A549 (cell line): ENCODE measurements at regions of chr5 and their contacts with region 1.

Region 1: DNA sequence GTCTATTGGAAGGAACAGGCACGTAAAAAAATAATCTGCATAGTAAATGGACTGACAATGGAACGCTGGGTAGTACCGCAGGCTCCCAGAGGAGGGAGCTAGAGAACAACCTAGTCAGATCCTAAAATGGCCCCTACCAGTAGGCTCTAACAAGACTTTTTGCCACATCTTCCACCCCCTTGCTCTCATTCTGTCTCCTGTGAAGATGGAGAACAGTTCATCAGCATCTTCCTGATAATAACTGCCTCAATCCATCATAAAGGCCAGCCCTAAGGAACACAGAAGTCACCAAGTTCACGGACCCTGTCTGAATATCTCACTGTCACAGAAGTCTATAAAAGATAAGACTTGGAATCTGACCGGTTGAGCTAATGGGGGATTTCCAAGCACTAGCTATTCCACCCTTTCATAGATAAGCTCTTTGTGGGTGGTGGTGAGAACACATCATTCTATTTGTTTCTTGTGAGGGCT is 133.4 kb downstream of the SLC1A3 start:
- DNase-seq: peak; percentile 47 to 72
- ATAC-seq: peak; percentile 37 to 62; a peak in 3 of 6 replicates
- H3K4me3 ChIP-seq: no peak overlapping the region
- H3K27ac ChIP-seq: no peak overlapping the region
- H3K4me1 ChIP-seq: 0 out of 3 replicates have a peak, but pooled peaks cover 4% of the 10 kb centered on the region
- CTCF ChIP-seq: peak; percentile 46
- EP300 ChIP-seq: no peak
- POLR2A ChIP-seq: no peak
- RAD21 ChIP-seq: peak in 1 of 2 experiments; percentile 51; a peak in 3 of 5 replicates

Region 2: GRCh38 chr5:36478646-36479317 is 261.0 kb before region 1 on chr5:
- CTCF ChIA-PET with region 1: no interaction called
- POLR2A ChIA-PET with region 1: no interaction called
- DNase-seq: no peak
- ATAC-seq: no peak
- H3K4me3 ChIP-seq: no peak overlapping the region
- H3K27ac ChIP-seq: no peak overlapping the region
- H3K4me1 ChIP-seq: no peaks in the 10 kb centered on the region
- CTCF ChIP-seq: no peak
- EP300 ChIP-seq: no peak
- POLR2A ChIP-seq: no peak
- RAD21 ChIP-seq: no peak

Region 3: GRCh38 chr5:36728697-36729543 is 10.9 kb before region 1 on chr5:
- CTCF ChIA-PET with region 1: interaction called, 27 read pairs
- POLR2A ChIA-PET with region 1: no interaction called
- DNase-seq: peak; percentile 57 to 69
- ATAC-seq: peak; percentile 71 to 87; a peak in 5 of 6 replicates
- H3K4me3 ChIP-seq: no peak overlapping the region
- H3K27ac ChIP-seq: no peak overlapping the region
- H3K4me1 ChIP-seq: no peaks in the 10 kb centered on the region
- CTCF ChIP-seq: peak; percentile 71
- EP300 ChIP-seq: no peak
- POLR2A ChIP-seq: no peak
- RAD21 ChIP-seq: peak; percentile 43 to 49; a peak in 4 of 5 replicates